Common myeloid progenitor, CD34-positive (primary cell): ENCODE measurements at regions of chr2 and their contacts with region 1.

Region 1: GRCh38 chr2:21042958-21043743 is 722 bp downstream of the APOB start:
- DNase-seq: peak; percentile 47 to 68 (median 61)
- H3K4me3 ChIP-seq: peak overlapping the region in 4 of 7 experiments; percentile 17 to 49 (median 32)
- H3K27ac ChIP-seq: no peak overlapping the region
- H3K4me1 ChIP-seq: peaks cover 0 to 19% (median 6%) of the 10 kb centered on the region in 4 experiments
- H3K27me3 ChIP-seq: peaks cover 2 to 28% (median 15%) of the 10 kb centered on the region in 5 experiments

Region 2: DNA sequence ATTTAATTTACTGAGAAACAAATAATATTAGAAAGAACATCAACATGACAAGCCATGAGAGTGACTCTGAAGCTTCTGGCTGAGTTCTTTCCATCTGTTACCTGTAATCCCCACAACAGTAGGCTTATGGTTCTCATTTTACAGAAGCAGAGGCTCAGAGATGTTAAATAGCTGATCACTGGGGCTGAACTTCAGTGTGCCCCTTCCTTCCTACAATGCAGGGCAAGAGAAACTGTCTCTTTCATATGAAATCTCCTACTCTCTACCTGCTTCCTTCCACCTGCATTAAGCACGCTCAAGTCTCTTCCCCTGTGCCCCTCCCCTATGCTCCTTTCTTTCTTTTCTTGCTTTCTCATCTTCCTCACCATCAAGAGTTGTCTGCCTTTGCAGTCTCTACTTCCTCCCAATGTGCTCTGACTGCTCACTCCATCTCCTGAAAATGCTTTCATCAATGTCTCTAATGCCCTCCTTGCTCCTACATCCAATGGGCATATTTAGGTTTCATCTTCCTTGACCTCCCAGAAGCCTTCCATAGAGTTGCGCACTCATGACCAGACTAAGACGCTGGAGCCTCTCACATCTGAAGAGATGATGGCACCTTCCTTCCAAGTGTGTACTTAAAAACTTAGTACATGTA is 23.0 kb before region 1 on chr2:
- CTCF ChIA-PET with region 1: no interaction called
- POLR2A ChIA-PET with region 1: no interaction called
- DNase-seq: no peak
- H3K4me3 ChIP-seq: no peak overlapping the region
- H3K27ac ChIP-seq: no peak overlapping the region
- H3K4me1 ChIP-seq: no peaks in the 10 kb centered on the region
- H3K27me3 ChIP-seq: peaks cover 0 to 1% (median 0%) of the 10 kb centered on the region in 5 experiments

Region 3: DNA sequence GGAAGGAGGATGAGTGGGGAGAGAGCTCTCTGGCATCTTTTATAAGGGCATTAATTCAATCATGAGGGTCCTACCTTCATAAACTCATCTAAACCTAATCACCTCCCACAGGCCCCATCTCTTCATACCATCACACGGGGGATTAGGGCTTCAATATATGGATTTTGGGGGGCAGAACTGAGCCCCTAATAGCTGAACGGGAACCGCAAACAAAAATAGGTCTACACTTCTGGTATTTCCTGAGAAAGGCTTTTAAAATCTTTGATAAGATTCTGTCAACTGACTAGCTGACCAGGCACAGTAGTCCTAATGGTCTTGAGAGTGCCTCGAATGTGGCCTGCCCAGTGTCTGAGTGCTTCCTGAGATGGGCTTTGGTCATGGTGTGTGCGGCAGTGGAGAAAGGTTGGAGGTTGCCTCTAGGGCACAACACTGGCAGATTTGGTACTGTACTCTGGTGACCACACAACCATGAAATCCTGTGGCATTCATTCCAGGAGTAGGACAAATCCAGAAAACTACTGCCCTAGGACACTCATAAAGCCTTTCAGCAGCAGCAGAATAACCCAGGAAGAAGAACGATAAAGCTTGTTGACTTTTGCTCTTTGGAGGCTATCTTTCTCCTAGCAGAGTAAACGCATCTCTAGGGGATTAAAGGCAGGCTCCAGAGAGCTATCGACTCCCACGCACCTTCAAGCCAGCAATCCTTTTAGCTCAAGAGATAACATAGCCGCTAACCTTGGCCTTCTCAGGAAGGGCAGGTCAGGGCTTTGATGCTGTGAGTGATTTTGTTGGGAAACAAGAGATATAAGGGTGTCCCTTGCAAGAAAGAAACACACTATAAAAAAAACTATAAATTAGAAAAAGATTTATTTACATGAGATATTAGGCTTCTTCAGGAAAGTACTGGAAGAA is 13.0 kb after region 1 on chr2:
- CTCF ChIA-PET with region 1: interaction called, 15 read pairs
- POLR2A ChIA-PET with region 1: no interaction called
- DNase-seq: no peak
- H3K4me3 ChIP-seq: no peak overlapping the region
- H3K27ac ChIP-seq: no peak overlapping the region
- H3K4me1 ChIP-seq: no peaks in the 10 kb centered on the region
- H3K27me3 ChIP-seq: no peaks in the 10 kb centered on the region

Region 4: GRCh38 chr2:21118302-21118920 is 75.3 kb after region 1 on chr2:
- CTCF ChIA-PET with region 1: interaction called, 112 read pairs
- POLR2A ChIA-PET with region 1: no interaction called
- DNase-seq: peak; percentile 31 to 64 (median 61)
- H3K4me3 ChIP-seq: no peak overlapping the region
- H3K27ac ChIP-seq: no peak overlapping the region
- H3K4me1 ChIP-seq: no peaks in the 10 kb centered on the region
- H3K27me3 ChIP-seq: peaks cover 0 to 4% (median 0%) of the 10 kb centered on the region in 5 experiments

Region 5: GRCh38 chr2:21317131-21317530 is 274.0 kb after region 1 on chr2:
- CTCF ChIA-PET with region 1: interaction called, 41 read pairs
- POLR2A ChIA-PET with region 1: no interaction called
- DNase-seq: peak; percentile 45 to 75 (median 71)
- H3K4me3 ChIP-seq: no peak overlapping the region
- H3K27ac ChIP-seq: no peak overlapping the region
- H3K4me1 ChIP-seq: no peaks in the 10 kb centered on the region
- H3K27me3 ChIP-seq: peaks cover 0 to 3% (median 0%) of the 10 kb centered on the region in 5 experiments